B cell (primary cell): ENCODE measurements at regions of chr7 and their contacts with region 1.

Region 1: DNA sequence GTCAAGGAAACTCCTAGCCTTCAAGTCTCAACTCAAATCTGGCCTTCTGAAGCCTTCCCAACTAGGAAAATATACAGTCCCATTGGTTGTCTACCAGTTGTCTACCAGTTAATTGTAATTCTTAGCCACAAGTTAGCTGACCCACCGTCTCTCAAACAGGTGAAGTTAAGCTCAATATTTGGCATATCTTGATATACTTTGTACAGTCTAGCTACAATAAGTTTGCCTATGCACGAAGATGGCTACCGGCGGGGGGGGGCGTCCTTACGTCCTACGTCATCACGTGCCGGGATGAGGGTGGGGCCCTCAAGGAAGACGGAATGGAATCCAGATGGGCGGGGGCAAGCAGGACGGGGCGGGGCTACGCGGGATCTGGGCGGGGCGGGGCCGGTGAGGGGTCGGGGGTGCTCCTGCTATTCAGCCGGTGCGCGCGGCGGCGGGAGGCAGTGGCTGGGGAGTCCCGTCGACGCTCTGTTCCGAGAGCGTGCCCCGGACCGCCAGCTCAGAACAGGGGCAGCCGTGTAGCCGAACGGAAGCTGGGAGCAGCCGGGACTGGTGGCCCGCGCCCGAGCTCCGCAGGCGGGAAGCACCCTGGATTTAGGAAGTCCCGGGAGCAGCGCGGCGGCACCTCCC is at the start of gene AHR:
- DNase-seq: peak; percentile 93
- ATAC-seq: peak; percentile 79
- H3K4me3 ChIP-seq: peak within 1 kb of the TSS; percentile 66 to 88 (median 77)
- H3K4me3 Mint-ChIP-seq: peak within 1 kb of the TSS; percentile 86
- H3K27ac ChIP-seq: peak within 1 kb of the TSS; percentile 74 to 92
- H3K27ac Mint-ChIP-seq: peak within 1 kb of the TSS; percentile 95
- H3K4me1 ChIP-seq: peaks cover 22 to 28% of the 10 kb centered on the region in 2 donors
- H3K4me1 Mint-ChIP-seq: peaks cover 32% of the 10 kb centered on the region
- H3K27me3 ChIP-seq: no peaks in the 10 kb centered on the region
- H3K27me3 Mint-ChIP-seq: no peaks in the 10 kb centered on the region
- CTCF ChIP-seq: no peak
- total RNA-seq, gene AHR: 11.2 and 13.8 TPM in 2 replicates

Region 2: DNA sequence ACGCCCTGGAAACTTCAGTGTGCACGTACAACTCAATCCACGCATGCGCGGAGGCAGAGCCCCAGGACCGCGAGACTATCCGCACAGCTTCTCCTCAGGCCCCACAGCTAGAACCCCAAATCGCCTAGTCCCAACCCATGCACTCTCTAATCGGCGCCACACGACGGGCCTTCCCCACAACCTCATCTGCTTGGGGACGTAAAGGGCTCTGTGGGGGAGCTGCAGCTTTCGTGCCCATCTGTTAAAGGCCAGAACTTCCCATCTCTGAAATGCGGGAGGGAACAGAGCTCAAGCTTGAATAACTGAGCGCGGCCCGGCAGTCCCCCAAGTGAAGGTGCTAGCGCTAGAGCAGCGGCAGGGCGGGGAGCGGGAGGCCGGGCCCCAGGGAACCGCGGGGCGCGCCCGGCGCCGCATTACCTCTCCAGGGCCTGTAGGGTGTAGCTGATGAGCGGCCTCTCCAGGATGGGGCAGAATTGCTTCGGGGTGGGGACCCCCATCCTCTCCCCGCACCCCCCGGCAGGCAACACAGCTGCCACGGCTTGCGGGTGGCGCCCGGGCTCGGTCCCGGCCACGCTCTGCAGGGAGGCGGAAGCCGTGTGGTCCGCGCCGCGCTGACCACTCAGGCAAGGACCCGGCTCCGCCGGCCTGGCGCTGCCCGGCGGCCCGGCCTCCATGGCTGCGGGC is 877.5 kb before region 1 on chr7:
- CTCF ChIA-PET with region 1: no interaction called
- POLR2A ChIA-PET with region 1: no interaction called
- intact Hi-C with region 1: loop called (anchors 2 kb)
- DNase-seq: peak; percentile 91
- ATAC-seq: peak; percentile 89
- H3K4me3 ChIP-seq: peak overlapping the region; percentile 55 to 86 (median 65)
- H3K4me3 Mint-ChIP-seq: peak overlapping the region; percentile 95
- H3K27ac ChIP-seq: peak overlapping the region; percentile 78 to 81
- H3K27ac Mint-ChIP-seq: peak overlapping the region; percentile 95
- H3K4me1 ChIP-seq: peaks cover 10 to 14% of the 10 kb centered on the region in 2 donors
- H3K4me1 Mint-ChIP-seq: peaks cover 24% of the 10 kb centered on the region
- H3K27me3 ChIP-seq: no peaks in the 10 kb centered on the region
- H3K27me3 Mint-ChIP-seq: no peaks in the 10 kb centered on the region
- CTCF ChIP-seq: peak; percentile 61

Region 3: DNA sequence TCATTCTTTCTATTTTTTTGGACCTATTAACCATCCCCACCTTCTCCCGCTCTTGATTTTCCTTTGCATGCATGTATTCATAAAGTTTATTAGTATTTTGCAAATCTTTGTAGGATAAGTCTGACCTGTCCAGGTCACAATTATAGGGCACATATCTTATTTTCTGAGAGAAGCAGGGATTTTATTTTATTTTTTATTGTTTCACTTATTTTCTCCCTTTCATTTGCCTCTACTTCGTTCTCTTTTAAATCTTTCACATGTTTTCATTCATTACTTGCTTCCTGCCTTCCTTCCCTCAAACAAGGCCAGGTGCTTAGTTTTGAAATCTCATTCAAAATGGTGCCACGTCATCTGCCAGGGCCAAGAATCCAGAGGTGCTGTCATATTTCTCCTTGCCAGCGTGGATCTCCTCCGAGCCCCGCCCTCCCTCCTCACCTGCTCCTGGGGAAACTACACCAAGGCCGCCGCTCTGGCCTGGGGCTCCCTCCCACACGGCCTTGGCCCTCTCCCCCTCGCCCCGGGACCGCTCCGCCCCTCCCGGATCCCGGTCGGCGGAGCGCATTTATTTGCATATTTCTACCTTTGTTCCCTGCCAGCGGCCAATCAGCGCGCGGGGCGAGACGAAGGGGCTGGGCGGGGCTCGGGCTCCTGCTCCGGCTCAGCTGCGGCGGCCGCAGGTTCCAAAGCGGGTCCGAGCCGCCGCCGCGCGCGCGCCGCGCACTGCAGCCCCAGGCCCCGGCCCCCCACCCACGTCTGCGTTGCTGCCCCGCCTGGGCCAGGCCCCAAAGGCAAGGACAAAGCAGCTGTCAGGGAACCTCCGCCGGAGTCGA is 545.0 kb before region 1 on chr7 and contains the start of gene TSPAN13:
- CTCF ChIA-PET with region 1: interaction called, 4 read pairs
- POLR2A ChIA-PET with region 1: no interaction called
- intact Hi-C with region 1: loop called (anchors 2 kb)
- DNase-seq: peak; percentile 87
- ATAC-seq: peak; percentile 86
- H3K4me3 ChIP-seq: peak within 1 kb of the TSS; percentile 80 to 92 (median 86)
- H3K4me3 Mint-ChIP-seq: peak within 1 kb of the TSS; percentile 100
- H3K27ac ChIP-seq: peak within 1 kb of the TSS; percentile 58 to 71
- H3K27ac Mint-ChIP-seq: peak within 1 kb of the TSS; percentile 96
- H3K4me1 ChIP-seq: peaks cover 29% of the 10 kb centered on the region in 2 donors
- H3K4me1 Mint-ChIP-seq: peaks cover 36% of the 10 kb centered on the region
- H3K27me3 ChIP-seq: no peaks in the 10 kb centered on the region
- H3K27me3 Mint-ChIP-seq: no peaks in the 10 kb centered on the region
- CTCF ChIP-seq: no peak
- total RNA-seq, gene TSPAN13: 26.2 and 26.3 TPM in 2 replicates

Region 4: GRCh38 chr7:16982640-16983350 is 315.5 kb before region 1 on chr7:
- CTCF ChIA-PET with region 1: interaction called, 40 read pairs
- POLR2A ChIA-PET with region 1: no interaction called
- intact Hi-C with region 1: loop called (anchors 1 kb)
- DNase-seq: peak; percentile 52
- ATAC-seq: peak; percentile 58
- H3K4me3 ChIP-seq: no peak overlapping the region
- H3K4me3 Mint-ChIP-seq: no peak overlapping the region
- H3K27ac ChIP-seq: no peak overlapping the region
- H3K27ac Mint-ChIP-seq: no peak overlapping the region
- H3K4me1 ChIP-seq: peaks cover 0 to 2% of the 10 kb centered on the region in 2 donors
- H3K4me1 Mint-ChIP-seq: peaks cover 8% of the 10 kb centered on the region
- H3K27me3 ChIP-seq: no peaks in the 10 kb centered on the region
- H3K27me3 Mint-ChIP-seq: no peaks in the 10 kb centered on the region
- CTCF ChIP-seq: peak; percentile 99

Region 5: GRCh38 chr7:17095001-17095574 is 203.2 kb before region 1 on chr7:
- CTCF ChIA-PET with region 1: no interaction called
- POLR2A ChIA-PET with region 1: no interaction called
- intact Hi-C with region 1: no loop called
- DNase-seq: no peak
- ATAC-seq: no peak
- H3K4me3 ChIP-seq: no peak overlapping the region
- H3K4me3 Mint-ChIP-seq: no peak overlapping the region
- H3K27ac ChIP-seq: no peak overlapping the region
- H3K27ac Mint-ChIP-seq: no peak overlapping the region
- H3K4me1 ChIP-seq: peaks cover 10 to 11% of the 10 kb centered on the region in 2 donors
- H3K4me1 Mint-ChIP-seq: peaks cover 15% of the 10 kb centered on the region
- H3K27me3 ChIP-seq: no peaks in the 10 kb centered on the region
- H3K27me3 Mint-ChIP-seq: no peaks in the 10 kb centered on the region
- CTCF ChIP-seq: no peak

Region 6: GRCh38 chr7:17144322-17144721 is 154.0 kb before region 1 on chr7:
- CTCF ChIA-PET with region 1: interaction called, 3 read pairs
- POLR2A ChIA-PET with region 1: no interaction called
- intact Hi-C with region 1: loop called (anchors 5 kb)
- DNase-seq: no peak
- ATAC-seq: no peak
- H3K4me3 ChIP-seq: no peak overlapping the region
- H3K4me3 Mint-ChIP-seq: no peak overlapping the region
- H3K27ac ChIP-seq: no peak overlapping the region
- H3K27ac Mint-ChIP-seq: no peak overlapping the region
- H3K4me1 ChIP-seq: peaks cover 0 to 4% of the 10 kb centered on the region in 2 donors
- H3K4me1 Mint-ChIP-seq: peaks cover 17% of the 10 kb centered on the region
- H3K27me3 ChIP-seq: no peaks in the 10 kb centered on the region
- H3K27me3 Mint-ChIP-seq: no peaks in the 10 kb centered on the region
- CTCF ChIP-seq: no peak

Region 7: DNA sequence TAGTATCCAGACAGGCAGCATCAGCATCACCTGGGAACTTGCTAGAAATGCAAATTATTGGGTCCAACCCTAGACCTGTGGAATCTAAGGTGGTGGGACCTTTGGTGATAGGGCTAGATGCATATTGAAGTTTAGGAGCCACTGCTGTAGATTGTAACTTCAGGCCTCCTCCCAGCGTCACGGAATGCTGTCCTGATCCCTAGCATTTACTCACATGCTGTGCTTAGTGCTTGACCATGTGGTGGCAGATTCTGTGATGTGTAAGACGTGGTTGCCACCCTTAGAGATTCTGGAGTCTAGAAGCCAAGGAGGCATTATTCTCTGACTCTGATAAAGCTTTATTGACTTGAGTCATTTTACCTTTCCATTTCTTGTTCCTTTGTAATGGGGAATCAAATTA is 13.6 kb after region 1 on chr7:
- CTCF ChIA-PET with region 1: interaction called, 16 read pairs
- POLR2A ChIA-PET with region 1: no interaction called
- intact Hi-C with region 1: no loop called
- DNase-seq: no peak
- ATAC-seq: no peak
- H3K4me3 ChIP-seq: no peak overlapping the region
- H3K4me3 Mint-ChIP-seq: no peak overlapping the region
- H3K27ac ChIP-seq: no peak overlapping the region
- H3K27ac Mint-ChIP-seq: no peak overlapping the region
- H3K4me1 ChIP-seq: no peaks in the 10 kb centered on the region
- H3K4me1 Mint-ChIP-seq: peaks cover 2% of the 10 kb centered on the region
- H3K27me3 ChIP-seq: no peaks in the 10 kb centered on the region
- H3K27me3 Mint-ChIP-seq: no peaks in the 10 kb centered on the region
- CTCF ChIP-seq: no peak

Region 8: GRCh38 chr7:17506095-17506494 is 207.8 kb after region 1 on chr7:
- CTCF ChIA-PET with region 1: no interaction called
- POLR2A ChIA-PET with region 1: no interaction called
- intact Hi-C with region 1: no loop called
- DNase-seq: no peak
- ATAC-seq: no peak
- H3K4me3 ChIP-seq: no peak overlapping the region
- H3K4me3 Mint-ChIP-seq: no peak overlapping the region
- H3K27ac ChIP-seq: no peak overlapping the region
- H3K27ac Mint-ChIP-seq: no peak overlapping the region
- H3K4me1 ChIP-seq: no peaks in the 10 kb centered on the region
- H3K4me1 Mint-ChIP-seq: peaks cover 3% of the 10 kb centered on the region
- H3K27me3 ChIP-seq: no peaks in the 10 kb centered on the region
- H3K27me3 Mint-ChIP-seq: no peaks in the 10 kb centered on the region
- CTCF ChIP-seq: no peak

Region 9: DNA sequence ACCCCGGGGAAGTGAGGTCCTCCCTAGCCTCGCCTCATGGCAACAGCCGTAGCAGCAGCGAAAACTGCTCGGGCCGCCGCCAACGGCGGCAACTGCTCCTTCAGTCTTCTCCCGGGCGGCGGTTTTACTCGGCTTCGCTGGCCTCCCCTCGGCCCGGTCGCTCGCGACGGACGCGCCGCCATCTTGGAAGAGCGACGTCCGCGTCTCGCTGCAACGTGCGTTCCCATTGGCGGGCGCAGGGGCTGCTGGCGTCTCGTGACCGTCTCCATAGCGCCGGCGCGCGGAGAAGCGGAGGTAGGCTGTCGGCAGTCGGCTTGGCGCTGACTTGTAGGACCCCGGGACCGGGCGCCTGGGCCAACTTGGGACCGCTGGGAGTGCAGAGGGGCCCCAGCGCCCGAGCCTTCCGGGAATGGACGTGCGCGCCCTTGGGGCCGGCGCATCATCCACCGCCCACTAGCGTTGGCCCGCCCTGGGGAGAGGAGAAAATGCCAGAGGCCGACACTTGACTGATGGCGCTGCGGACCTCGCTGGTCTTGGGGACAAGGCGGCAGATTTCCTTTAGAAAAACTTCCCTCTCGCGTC is 642.1 kb after region 1 on chr7 and contains the start of gene SNX13:
- CTCF ChIA-PET with region 1: no interaction called
- POLR2A ChIA-PET with region 1: no interaction called
- intact Hi-C with region 1: loop called (anchors 5 kb)
- DNase-seq: peak; percentile 95
- ATAC-seq: peak; percentile 90
- H3K4me3 ChIP-seq: peak within 1 kb of the TSS; percentile 81 to 96 (median 95)
- H3K4me3 Mint-ChIP-seq: peak within 1 kb of the TSS; percentile 98
- H3K27ac ChIP-seq: peak within 1 kb of the TSS; percentile 97
- H3K27ac Mint-ChIP-seq: peak within 1 kb of the TSS; percentile 99
- H3K4me1 ChIP-seq: peaks cover 14 to 22% of the 10 kb centered on the region in 2 donors
- H3K4me1 Mint-ChIP-seq: peaks cover 38% of the 10 kb centered on the region
- H3K27me3 ChIP-seq: no peaks in the 10 kb centered on the region
- H3K27me3 Mint-ChIP-seq: no peaks in the 10 kb centered on the region
- CTCF ChIP-seq: no peak
- total RNA-seq, gene SNX13: 58.1 and 62.6 TPM in 2 replicates